ENCODE measurements at regions of chr18 and their contacts with region 1.

Region 1: GRCh38 chr18:47772374-47773248 is 157.8 kb downstream of the SMAD2 start:
- DNase-seq: no peak
- H3K4me3 ChIP-seq: no peak overlapping the region
- H3K27ac ChIP-seq: no peak overlapping the region
- H3K4me1 ChIP-seq: no peaks in the 10 kb centered on the region
- H3K27me3 ChIP-seq: no peaks in the 10 kb centered on the region
- CTCF ChIP-seq: peak; percentile 15 to 56 (median 39)
- EP300 ChIP-seq: no peak
- POLR2A ChIP-seq: no peak

Region 2: GRCh38 chr18:48022531-48023329 is 250.1 kb after region 1 on chr18:
- intact Hi-C with region 1: loop called (anchors 1 kb)
- DNase-seq: peak; percentile 40
- H3K4me3 ChIP-seq: no peak overlapping the region
- H3K27ac ChIP-seq: no peak overlapping the region
- H3K4me1 ChIP-seq: peaks cover 0 to 5% (median 0%) of the 10 kb centered on the region in 4 donors
- H3K27me3 ChIP-seq: peaks cover 0 to 20% (median 10%) of the 10 kb centered on the region in 3 donors
- CTCF ChIP-seq: peak in 1 of 4 experiments; percentile 46
- EP300 ChIP-seq: no peak
- POLR2A ChIP-seq: no peak

Measured in sigmoid colon (tissue), 7 donors.